B cell (primary cell): ENCODE measurements at regions of chr1 and their contacts with region 1.

Region 1: DNA sequence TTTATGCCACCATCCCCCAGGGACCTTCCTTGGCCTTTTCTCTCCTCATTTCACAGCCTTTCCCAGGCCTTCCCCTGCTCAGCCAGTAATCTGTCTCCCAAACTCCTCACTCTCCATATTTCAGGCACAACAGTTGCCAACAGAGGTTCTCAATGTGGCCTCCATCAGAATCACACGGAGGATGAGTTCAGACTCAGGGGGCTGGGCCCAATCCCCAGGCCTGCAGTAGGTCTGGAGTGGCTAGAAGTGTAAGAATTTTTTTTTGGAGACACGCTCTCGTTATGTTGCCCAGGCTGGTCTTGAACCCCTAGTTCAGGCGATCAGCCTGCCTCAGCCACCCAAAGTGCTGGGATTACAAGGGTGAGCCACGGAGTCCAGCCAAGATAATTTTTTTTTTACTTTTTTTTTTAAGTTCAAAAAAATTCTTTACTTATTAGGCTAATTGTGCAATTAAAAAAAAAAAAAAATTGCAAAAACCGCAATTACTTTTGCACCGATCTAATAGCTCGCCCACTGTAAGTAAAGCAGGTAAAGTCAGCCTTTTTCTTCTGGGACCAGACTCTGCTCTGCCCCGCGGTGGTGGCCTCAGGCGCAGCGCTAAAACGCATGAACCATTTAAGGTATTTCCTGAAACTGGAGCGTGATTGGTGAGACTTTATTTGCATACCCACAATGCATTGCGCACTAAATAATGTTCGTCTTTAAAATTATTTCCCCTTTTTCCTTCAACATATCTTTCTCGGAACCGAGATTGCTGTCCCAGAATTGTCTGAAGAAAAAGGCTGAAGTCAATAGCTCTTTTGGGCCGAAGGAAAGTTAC is 18.7 kb downstream of the KIAA2013 start:
- DNase-seq: peak; percentile 95
- ATAC-seq: peak; percentile 55
- H3K4me3 ChIP-seq: peak overlapping the region; percentile 77 to 85 (median 83)
- H3K4me3 Mint-ChIP-seq: peak overlapping the region; percentile 95
- H3K27ac ChIP-seq: peak overlapping the region; percentile 99 to 100
- H3K27ac Mint-ChIP-seq: peak overlapping the region; percentile 99
- H3K4me1 ChIP-seq: peaks cover 3 to 11% of the 10 kb centered on the region in 2 donors
- H3K4me1 Mint-ChIP-seq: peaks cover 28% of the 10 kb centered on the region
- H3K27me3 ChIP-seq: no peaks in the 10 kb centered on the region
- H3K27me3 Mint-ChIP-seq: no peaks in the 10 kb centered on the region
- CTCF ChIP-seq: peak; percentile 80

Region 2: GRCh38 chr1:11719313-11720032 is 188.0 kb before region 1 on chr1:
- CTCF ChIA-PET with region 1: no interaction called
- POLR2A ChIA-PET with region 1: interaction called, 15 read pairs
- intact Hi-C with region 1: no loop called
- DNase-seq: peak; percentile 91
- ATAC-seq: peak; percentile 88
- H3K4me3 ChIP-seq: peak overlapping the region in 4 of 5 experiments; percentile 43 to 67 (median 63)
- H3K4me3 Mint-ChIP-seq: peak overlapping the region; percentile 72
- H3K27ac ChIP-seq: peak overlapping the region; percentile 54 to 73
- H3K27ac Mint-ChIP-seq: peak overlapping the region; percentile 96
- H3K4me1 ChIP-seq: peaks cover 8 to 13% of the 10 kb centered on the region in 2 donors
- H3K4me1 Mint-ChIP-seq: peaks cover 13% of the 10 kb centered on the region
- H3K27me3 ChIP-seq: no peaks in the 10 kb centered on the region
- H3K27me3 Mint-ChIP-seq: no peaks in the 10 kb centered on the region
- CTCF ChIP-seq: peak; percentile 95

Region 3: GRCh38 chr1:11813021-11813420 is 94.5 kb before region 1 on chr1:
- CTCF ChIA-PET with region 1: interaction called, 4 read pairs
- POLR2A ChIA-PET with region 1: interaction called, 26 read pairs
- intact Hi-C with region 1: loop called (anchors 2 kb)
- DNase-seq: no peak
- ATAC-seq: no peak
- H3K4me3 ChIP-seq: no peak overlapping the region
- H3K4me3 Mint-ChIP-seq: peak overlapping the region; percentile 23
- H3K27ac ChIP-seq: peak overlapping the region in 1 of 2 donors; percentile 91
- H3K27ac Mint-ChIP-seq: peak overlapping the region; percentile 86
- H3K4me1 ChIP-seq: peaks cover 42 to 54% of the 10 kb centered on the region in 2 donors
- H3K4me1 Mint-ChIP-seq: peaks cover 61% of the 10 kb centered on the region
- H3K27me3 ChIP-seq: no peaks in the 10 kb centered on the region
- H3K27me3 Mint-ChIP-seq: no peaks in the 10 kb centered on the region
- CTCF ChIP-seq: no peak

Region 4: GRCh38 chr1:11934302-11935056 is 27.0 kb after region 1 on chr1 and contains the start of gene PLOD1:
- CTCF ChIA-PET with region 1: interaction called, 3 read pairs
- POLR2A ChIA-PET with region 1: interaction called, 28 read pairs
- intact Hi-C with region 1: loop called (anchors 2 kb)
- DNase-seq: peak; percentile 85
- ATAC-seq: peak; percentile 100
- H3K4me3 ChIP-seq: peak within 1 kb of the TSS; percentile 45 to 82 (median 71)
- H3K4me3 Mint-ChIP-seq: peak within 1 kb of the TSS; percentile 90
- H3K27ac ChIP-seq: peak within 1 kb of the TSS; percentile 38 to 69
- H3K27ac Mint-ChIP-seq: peak within 1 kb of the TSS; percentile 74
- H3K4me1 ChIP-seq: peaks cover 9 to 12% of the 10 kb centered on the region in 2 donors
- H3K4me1 Mint-ChIP-seq: peaks cover 8% of the 10 kb centered on the region
- H3K27me3 ChIP-seq: no peaks in the 10 kb centered on the region
- H3K27me3 Mint-ChIP-seq: no peaks in the 10 kb centered on the region
- CTCF ChIP-seq: no peak
- total RNA-seq, gene PLOD1: 9.6 and 13.4 TPM in 2 replicates

Region 5: DNA sequence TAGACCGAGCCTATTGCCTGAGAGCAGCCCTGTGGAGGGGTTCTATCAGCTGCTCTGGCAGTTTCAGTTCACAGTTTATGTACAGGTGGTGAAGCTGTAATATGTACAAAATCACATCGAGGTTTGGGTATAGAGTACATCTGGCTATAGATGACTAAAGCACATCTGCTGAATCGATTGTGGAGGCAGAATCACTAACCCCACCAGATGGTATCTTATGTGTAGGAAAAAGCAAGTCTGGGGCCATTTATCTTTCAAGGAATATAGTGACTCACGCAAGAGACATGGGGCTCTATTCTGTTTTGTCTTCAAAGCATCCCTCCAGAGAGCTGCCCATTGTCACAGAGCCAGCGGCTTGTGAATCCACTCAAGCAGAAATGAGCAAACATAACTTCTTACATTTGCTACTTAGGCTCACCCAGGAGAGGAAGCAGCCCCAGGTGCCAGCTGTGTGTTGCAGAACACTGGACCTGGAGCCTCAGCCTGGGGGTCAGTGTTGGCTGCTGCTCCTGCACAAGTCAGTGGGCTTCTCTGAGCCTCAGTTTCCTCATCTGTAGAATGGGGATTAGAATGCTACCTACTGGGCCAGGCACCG is 133.1 kb after region 1 on chr1:
- CTCF ChIA-PET with region 1: no interaction called
- POLR2A ChIA-PET with region 1: interaction called, 26 read pairs
- intact Hi-C with region 1: no loop called
- DNase-seq: peak; percentile 74
- ATAC-seq: peak; percentile 85
- H3K4me3 ChIP-seq: peak overlapping the region in 3 of 5 experiments; percentile 20 to 47 (median 32)
- H3K4me3 Mint-ChIP-seq: peak overlapping the region; percentile 74
- H3K27ac ChIP-seq: peak overlapping the region; percentile 82 to 91
- H3K27ac Mint-ChIP-seq: peak overlapping the region; percentile 95
- H3K4me1 ChIP-seq: peaks cover 40 to 50% of the 10 kb centered on the region in 2 donors
- H3K4me1 Mint-ChIP-seq: peaks cover 52% of the 10 kb centered on the region
- H3K27me3 ChIP-seq: no peaks in the 10 kb centered on the region
- H3K27me3 Mint-ChIP-seq: no peaks in the 10 kb centered on the region
- CTCF ChIP-seq: no peak